ENCODE measurements at regions of chr2 and their contacts with region 1.

Region 1: GRCh38 chr2:237674731-237675276 is 47.4 kb downstream of the LRRFIP1 start:
- H3K4me3 Mint-ChIP-seq: peak overlapping the region; percentile 64
- H3K27ac Mint-ChIP-seq: peak overlapping the region; percentile 96
- H3K4me1 Mint-ChIP-seq: peaks cover 70% of the 10 kb centered on the region
- H3K27me3 Mint-ChIP-seq: no peaks in the 10 kb centered on the region

Region 2: DNA sequence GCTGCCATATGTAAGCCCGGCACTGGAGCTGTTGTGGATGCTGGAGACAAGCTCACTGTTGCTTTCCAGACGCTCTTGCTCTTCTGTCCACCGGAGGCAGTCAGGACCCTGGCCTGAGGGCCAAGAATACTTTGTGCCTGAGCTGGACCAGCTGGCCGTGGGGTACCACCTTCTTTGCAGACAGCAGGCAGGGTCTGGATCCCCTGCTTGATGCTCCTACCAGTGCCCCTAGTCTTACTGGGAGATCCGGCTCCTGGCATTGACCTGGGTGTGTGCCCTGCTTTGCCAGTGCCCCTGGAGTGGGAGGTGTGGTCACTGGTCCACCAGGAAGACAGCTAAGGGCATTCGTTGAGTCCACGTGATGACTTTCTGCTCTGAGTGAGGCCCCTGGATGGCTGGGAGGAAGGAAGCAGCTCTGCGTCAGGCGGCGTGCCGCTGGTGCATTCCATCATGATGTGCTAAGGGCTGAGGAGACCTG is 11.9 kb after region 1 on chr2:
- intact Hi-C with region 1: loop called (anchors 1 kb)
- H3K4me3 Mint-ChIP-seq: no peak overlapping the region
- H3K27ac Mint-ChIP-seq: peak overlapping the region; percentile 85
- H3K4me1 Mint-ChIP-seq: peaks cover 67% of the 10 kb centered on the region
- H3K27me3 Mint-ChIP-seq: no peaks in the 10 kb centered on the region

Region 3: GRCh38 chr2:237691908-237692600 is 17.2 kb after region 1 on chr2:
- intact Hi-C with region 1: loop called (anchors 1 kb)
- H3K4me3 Mint-ChIP-seq: peak overlapping the region; percentile 99
- H3K27ac Mint-ChIP-seq: peak overlapping the region; percentile 93
- H3K4me1 Mint-ChIP-seq: peaks cover 74% of the 10 kb centered on the region
- H3K27me3 Mint-ChIP-seq: no peaks in the 10 kb centered on the region

Region 4: GRCh38 chr2:237700512-237701032 is 25.8 kb after region 1 on chr2:
- intact Hi-C with region 1: loop called (anchors 5 kb)
- H3K4me3 Mint-ChIP-seq: peak overlapping the region; percentile 74
- H3K27ac Mint-ChIP-seq: peak overlapping the region; percentile 93
- H3K4me1 Mint-ChIP-seq: peaks cover 100% of the 10 kb centered on the region
- H3K27me3 Mint-ChIP-seq: no peaks in the 10 kb centered on the region

Region 5: DNA sequence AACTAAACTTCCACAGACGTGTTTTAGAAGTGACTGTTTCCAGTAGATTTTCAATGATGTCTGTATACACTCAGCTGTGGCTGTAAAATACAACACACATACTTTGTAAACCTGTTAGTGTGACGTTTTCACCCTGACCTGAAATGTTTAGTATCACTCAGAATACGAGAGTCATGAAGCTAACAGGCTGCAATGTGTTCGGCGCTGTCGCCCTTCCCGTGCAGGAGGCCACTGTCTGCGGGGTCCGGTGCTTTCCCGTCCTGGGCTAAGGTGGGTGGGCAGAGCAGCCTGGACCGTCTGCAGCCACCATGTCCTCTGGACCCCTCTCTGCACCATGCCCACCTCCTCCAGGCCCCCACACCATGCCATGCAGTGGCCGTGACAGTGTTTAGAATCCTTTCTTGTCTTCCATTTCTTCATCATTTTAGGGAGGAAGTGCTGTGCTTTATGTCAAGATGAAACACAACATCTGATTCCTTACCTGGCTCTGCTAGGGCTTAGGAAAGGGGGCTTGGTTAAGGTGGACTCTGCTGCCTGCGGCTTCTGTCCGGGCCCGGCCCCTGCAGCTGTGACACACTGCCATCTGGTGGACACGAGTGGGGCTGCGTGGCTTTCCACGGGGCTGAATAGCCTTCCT is 69.9 kb after region 1 on chr2:
- intact Hi-C with region 1: loop called (anchors 1 kb)
- H3K4me3 Mint-ChIP-seq: no peak overlapping the region
- H3K27ac Mint-ChIP-seq: peak overlapping the region; percentile 45
- H3K4me1 Mint-ChIP-seq: peaks cover 57% of the 10 kb centered on the region
- H3K27me3 Mint-ChIP-seq: no peaks in the 10 kb centered on the region